ENCODE measurements at regions of chr11 and their contacts with region 1.

Region 1: DNA sequence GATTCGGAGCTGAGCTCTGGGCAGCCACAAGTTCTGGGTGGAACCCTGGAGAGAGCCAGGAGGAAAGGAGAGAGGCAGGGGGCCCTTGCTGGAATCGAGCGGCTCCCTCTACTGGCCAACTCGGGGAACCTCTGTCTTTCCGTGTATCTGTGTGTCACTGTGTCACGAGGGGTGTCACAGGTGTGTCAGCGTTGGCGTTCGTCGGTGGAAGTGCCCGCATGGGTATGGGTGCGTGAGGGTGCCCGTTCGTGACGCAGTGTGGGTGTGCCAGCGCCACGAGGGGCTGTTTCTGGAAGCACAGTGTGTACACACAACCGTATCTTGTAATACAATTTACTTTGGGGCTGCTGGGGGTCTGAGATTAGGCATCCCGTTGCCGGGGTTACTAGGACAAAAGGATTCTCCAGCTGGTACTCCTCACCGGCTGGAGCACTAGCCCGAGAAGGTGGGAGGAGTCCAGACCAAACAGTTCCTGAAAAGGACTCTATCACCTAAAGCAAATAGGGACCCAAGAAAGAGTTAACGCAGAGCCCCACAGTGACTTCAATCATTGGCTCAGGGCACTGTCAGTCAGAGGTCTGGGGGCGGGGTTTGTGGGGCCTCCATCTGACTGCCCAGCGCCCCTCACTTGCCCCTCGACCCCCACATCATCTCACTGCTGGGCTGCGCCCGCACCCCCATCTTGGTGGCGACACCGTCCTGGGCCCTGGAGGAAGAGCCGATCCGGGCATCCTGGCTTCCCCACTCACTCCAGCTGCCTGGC is 2.6 kb upstream of the BCL9L start:
- DNase-seq: peak; percentile 94 to 100 (median 97)
- H3K4me3 ChIP-seq: peak overlapping the region; percentile 89 to 97
- H3K4me3 Mint-ChIP-seq: peak overlapping the region; percentile 85 to 97 (median 94)
- H3K27ac ChIP-seq: peak overlapping the region; percentile 99
- H3K27ac Mint-ChIP-seq: peak overlapping the region; percentile 97 to 100 (median 100)
- H3K4me1 ChIP-seq: peaks cover 36% of the 10 kb centered on the region
- H3K4me1 Mint-ChIP-seq: peaks cover 26 to 65% (median 34%) of the 10 kb centered on the region in 4 donors
- H3K27me3 ChIP-seq: no peaks in the 10 kb centered on the region
- H3K27me3 Mint-ChIP-seq: peaks cover 1 to 2% of the 10 kb centered on the region in 2 donors

Region 2: GRCh38 chr11:118689851-118690552 is 238.3 kb before region 1 on chr11:
- CTCF ChIA-PET with region 1: interaction called, 19 read pairs
- POLR2A ChIA-PET with region 1: interaction called, 11 read pairs
- intact Hi-C with region 1: loop called (anchors 1 kb)
- DNase-seq: peak; percentile 76 to 86 (median 83)
- H3K4me3 ChIP-seq: peak overlapping the region; percentile 44 to 75
- H3K4me3 Mint-ChIP-seq: peak overlapping the region; percentile 65 to 83 (median 76)
- H3K27ac ChIP-seq: peak overlapping the region; percentile 59
- H3K27ac Mint-ChIP-seq: peak overlapping the region in 6 of 7 donors; percentile 50 to 89 (median 78)
- H3K4me1 ChIP-seq: peaks cover 51% of the 10 kb centered on the region
- H3K4me1 Mint-ChIP-seq: peaks cover 37 to 67% (median 50%) of the 10 kb centered on the region in 4 donors
- H3K27me3 ChIP-seq: no peaks in the 10 kb centered on the region
- H3K27me3 Mint-ChIP-seq: peaks cover 0 to 3% of the 10 kb centered on the region in 2 donors

Region 3: GRCh38 chr11:118819334-118820070 is 108.8 kb before region 1 on chr11:
- CTCF ChIA-PET with region 1: no interaction called
- POLR2A ChIA-PET with region 1: no interaction called
- intact Hi-C with region 1: no loop called
- DNase-seq: no peak
- H3K4me3 ChIP-seq: no peak overlapping the region
- H3K4me3 Mint-ChIP-seq: no peak overlapping the region
- H3K27ac ChIP-seq: no peak overlapping the region
- H3K27ac Mint-ChIP-seq: no peak overlapping the region
- H3K4me1 ChIP-seq: peaks cover 9% of the 10 kb centered on the region
- H3K4me1 Mint-ChIP-seq: peaks cover 5 to 9% (median 6%) of the 10 kb centered on the region in 4 donors
- H3K27me3 ChIP-seq: no peaks in the 10 kb centered on the region
- H3K27me3 Mint-ChIP-seq: no peaks in the 10 kb centered on the region

Region 4: GRCh38 chr11:118870396-118871345 is 57.6 kb before region 1 on chr11:
- CTCF ChIA-PET with region 1: interaction called, 4 read pairs
- POLR2A ChIA-PET with region 1: interaction called, 40 read pairs
- intact Hi-C with region 1: no loop called
- DNase-seq: peak in 2 of 5 donors; percentile 50 to 60
- H3K4me3 ChIP-seq: peak overlapping the region in 1 of 2 donors; percentile 33
- H3K4me3 Mint-ChIP-seq: peak overlapping the region; percentile 80 to 89 (median 83)
- H3K27ac ChIP-seq: peak overlapping the region; percentile 82
- H3K27ac Mint-ChIP-seq: peak overlapping the region; percentile 96 to 100 (median 99)
- H3K4me1 ChIP-seq: peaks cover 66% of the 10 kb centered on the region
- H3K4me1 Mint-ChIP-seq: peaks cover 41 to 62% (median 49%) of the 10 kb centered on the region in 4 donors
- H3K27me3 ChIP-seq: no peaks in the 10 kb centered on the region
- H3K27me3 Mint-ChIP-seq: no peaks in the 10 kb centered on the region

Region 5: GRCh38 chr11:118895142-118896039 is 32.9 kb before region 1 on chr11:
- CTCF ChIA-PET with region 1: interaction called, 15 read pairs
- POLR2A ChIA-PET with region 1: no interaction called
- intact Hi-C with region 1: loop called (anchors 1 kb)
- DNase-seq: peak; percentile 80 to 91 (median 82)
- H3K4me3 ChIP-seq: peak overlapping the region; percentile 17 to 37
- H3K4me3 Mint-ChIP-seq: peak overlapping the region; percentile 68 to 87 (median 76)
- H3K27ac ChIP-seq: peak overlapping the region; percentile 84
- H3K27ac Mint-ChIP-seq: peak overlapping the region; percentile 93 to 98 (median 97)
- H3K4me1 ChIP-seq: peaks cover 83% of the 10 kb centered on the region
- H3K4me1 Mint-ChIP-seq: peaks cover 58 to 82% (median 70%) of the 10 kb centered on the region in 4 donors
- H3K27me3 ChIP-seq: no peaks in the 10 kb centered on the region
- H3K27me3 Mint-ChIP-seq: no peaks in the 10 kb centered on the region

Region 6: GRCh38 chr11:118914178-118914918 is 13.9 kb before region 1 on chr11:
- CTCF ChIA-PET with region 1: interaction called, 9 read pairs
- POLR2A ChIA-PET with region 1: no interaction called
- intact Hi-C with region 1: loop called (anchors 1 kb)
- DNase-seq: peak; percentile 80 to 95 (median 83)
- H3K4me3 ChIP-seq: peak overlapping the region; percentile 59 to 73
- H3K4me3 Mint-ChIP-seq: peak overlapping the region; percentile 78 to 93 (median 88)
- H3K27ac ChIP-seq: peak overlapping the region; percentile 99
- H3K27ac Mint-ChIP-seq: peak overlapping the region; percentile 99 to 100 (median 99)
- H3K4me1 ChIP-seq: peaks cover 95% of the 10 kb centered on the region
- H3K4me1 Mint-ChIP-seq: peaks cover 61 to 86% (median 71%) of the 10 kb centered on the region in 4 donors
- H3K27me3 ChIP-seq: no peaks in the 10 kb centered on the region
- H3K27me3 Mint-ChIP-seq: no peaks in the 10 kb centered on the region

Region 7: DNA sequence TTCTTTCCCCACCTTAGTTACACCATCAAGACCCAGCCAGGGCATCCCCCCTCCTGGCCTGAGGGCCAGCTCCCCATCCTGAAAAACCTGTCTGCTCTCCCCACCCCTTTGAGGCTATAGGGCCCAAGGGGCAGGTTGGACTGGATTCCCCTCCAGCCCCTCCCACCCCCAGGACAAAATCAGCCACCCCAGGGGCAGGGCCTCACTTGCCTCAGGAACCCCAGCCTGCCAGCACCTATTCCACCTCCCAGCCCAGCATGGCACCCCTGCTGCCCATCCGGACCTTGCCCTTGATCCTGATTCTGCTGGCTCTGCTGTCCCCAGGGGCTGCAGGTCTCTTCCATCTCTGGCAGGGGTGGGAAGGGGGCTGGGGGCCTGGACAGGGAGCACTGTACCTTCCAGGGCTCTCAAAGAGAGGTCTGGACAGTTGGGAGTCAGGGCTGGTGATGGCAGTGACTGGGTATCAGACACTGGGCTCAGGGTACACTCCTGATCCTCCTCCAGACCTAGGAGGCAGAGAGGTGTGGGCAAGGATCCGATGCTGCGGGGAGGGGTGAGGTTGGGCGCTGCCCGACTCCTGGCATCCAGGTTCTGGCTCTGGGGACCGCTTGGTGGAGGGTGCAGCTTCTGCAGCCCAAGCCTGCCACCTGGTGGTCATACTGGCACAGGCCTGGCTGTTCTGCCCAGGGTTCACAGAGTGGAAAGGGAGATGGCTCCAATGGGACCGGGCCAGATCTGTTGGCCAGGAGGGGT is 28.0 kb after region 1 on chr11 and contains the start of gene UPK2:
- CTCF ChIA-PET with region 1: interaction called, 18 read pairs
- POLR2A ChIA-PET with region 1: interaction called, 4 read pairs
- intact Hi-C with region 1: loop called (anchors 1 kb)
- DNase-seq: peak; percentile 83 to 85 (median 83)
- H3K4me3 ChIP-seq: no peak within 1 kb of the TSS
- H3K4me3 Mint-ChIP-seq: no peak within 1 kb of the TSS
- H3K27ac ChIP-seq: no peak within 1 kb of the TSS
- H3K27ac Mint-ChIP-seq: peak within 1 kb of the TSS in 4 of 7 donors; percentile 42 to 55 (median 51)
- H3K4me1 ChIP-seq: peaks cover 5% of the 10 kb centered on the region
- H3K4me1 Mint-ChIP-seq: peaks cover 4 to 5% (median 4%) of the 10 kb centered on the region in 4 donors
- H3K27me3 ChIP-seq: no peaks in the 10 kb centered on the region
- H3K27me3 Mint-ChIP-seq: peaks cover under 1 to 4% of the 10 kb centered on the region in 2 donors
- total RNA-seq, gene UPK2: not detected

Region 8: GRCh38 chr11:119030329-119031049 is 102.2 kb after region 1 on chr11 and contains the start of gene SLC37A4:
- CTCF ChIA-PET with region 1: interaction called, 6 read pairs
- POLR2A ChIA-PET with region 1: no interaction called
- intact Hi-C with region 1: loop called (anchors 1 kb)
- DNase-seq: peak; percentile 98 to 99 (median 99)
- H3K4me3 ChIP-seq: peak within 1 kb of the TSS; percentile 61 to 91
- H3K4me3 Mint-ChIP-seq: peak within 1 kb of the TSS; percentile 78 to 91 (median 82)
- H3K27ac ChIP-seq: peak within 1 kb of the TSS; percentile 76
- H3K27ac Mint-ChIP-seq: peak within 1 kb of the TSS; percentile 64 to 95 (median 93)
- H3K4me1 ChIP-seq: peaks cover 19% of the 10 kb centered on the region
- H3K4me1 Mint-ChIP-seq: peaks cover 14 to 40% (median 19%) of the 10 kb centered on the region in 4 donors
- H3K27me3 ChIP-seq: no peaks in the 10 kb centered on the region
- H3K27me3 Mint-ChIP-seq: no peaks in the 10 kb centered on the region
- total RNA-seq, gene SLC37A4: 14.6 to 14.8 TPM

Region 9: DNA sequence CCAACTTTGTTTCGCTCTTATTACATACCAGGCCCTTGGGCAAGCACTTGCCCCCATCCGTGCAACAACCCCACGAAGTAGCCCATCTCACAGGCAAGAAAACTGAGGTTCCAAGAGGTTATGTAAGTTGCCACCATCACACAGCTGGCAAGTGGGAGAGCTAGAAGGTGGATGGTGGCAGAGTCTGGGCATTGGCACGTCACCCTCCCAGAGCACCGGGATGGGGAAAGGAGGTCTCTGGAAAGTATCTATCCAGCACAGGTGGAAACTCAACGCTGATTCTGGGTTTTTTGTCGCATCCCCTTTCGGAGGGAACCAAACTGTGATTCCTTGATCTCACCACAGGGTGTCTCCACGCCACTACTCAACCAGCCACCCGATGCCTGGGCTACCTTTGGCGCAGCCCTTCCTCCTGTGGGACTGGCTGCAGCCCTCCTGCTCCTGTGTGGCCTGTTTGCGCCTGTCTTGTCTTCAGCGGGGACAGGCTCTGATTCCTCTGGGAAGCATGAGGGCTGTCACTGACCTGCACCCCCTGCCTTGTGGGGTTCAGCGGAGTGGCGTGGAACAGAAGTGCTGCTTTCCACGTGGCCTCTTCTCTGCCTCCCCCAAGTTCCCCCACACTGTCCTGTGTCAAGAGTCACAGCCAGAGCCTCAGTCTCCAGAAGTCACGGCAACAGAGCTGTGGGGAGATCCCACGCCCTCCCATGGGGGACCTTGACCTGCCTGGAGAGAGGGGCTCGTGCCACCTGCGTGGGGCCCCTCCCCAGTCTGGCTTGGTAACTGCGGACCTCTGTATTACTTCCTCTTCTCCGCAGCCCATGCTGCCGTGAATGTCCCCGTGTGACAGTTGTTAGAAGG is 1244.0 kb after region 1 on chr11:
- CTCF ChIA-PET with region 1: no interaction called
- POLR2A ChIA-PET with region 1: no interaction called
- intact Hi-C with region 1: no loop called
- DNase-seq: peak in 4 of 5 donors; percentile 12 to 27 (median 22)
- H3K4me3 ChIP-seq: no peak overlapping the region
- H3K4me3 Mint-ChIP-seq: peak overlapping the region in 1 of 8 donors; percentile 21
- H3K27ac ChIP-seq: no peak overlapping the region
- H3K27ac Mint-ChIP-seq: no peak overlapping the region
- H3K4me1 ChIP-seq: peaks cover 7% of the 10 kb centered on the region
- H3K4me1 Mint-ChIP-seq: peaks cover 0 to 7% (median 5%) of the 10 kb centered on the region in 4 donors
- H3K27me3 ChIP-seq: peaks cover 26% of the 10 kb centered on the region
- H3K27me3 Mint-ChIP-seq: peaks cover 44 to 50% of the 10 kb centered on the region in 2 donors